CD14-positive monocyte (primary cell): ENCODE measurements at regions of chr18 and their contacts with region 1.

Region 1: GRCh38 chr18:463827-464541 is 36.5 kb downstream of the COLEC12 start:
- DNase-seq: peak; percentile 80 to 89 (median 88)
- H3K4me3 ChIP-seq: peak overlapping the region in 1 of 3 experiments; percentile 41
- H3K4me3 Mint-ChIP-seq: peak overlapping the region in 1 of 2 donors; percentile 71
- H3K27ac ChIP-seq: peak overlapping the region; percentile 41 to 67
- H3K27ac Mint-ChIP-seq: peak overlapping the region; percentile 80 to 93 (median 91)
- H3K4me1 ChIP-seq: peaks cover 28 to 32% of the 10 kb centered on the region in 2 donors
- H3K4me1 Mint-ChIP-seq: peaks cover 24% of the 10 kb centered on the region
- H3K27me3 ChIP-seq: no peaks in the 10 kb centered on the region
- H3K27me3 Mint-ChIP-seq: peaks cover 0 to 2% (median 0%) of the 10 kb centered on the region in 3 donors
- CTCF ChIP-seq: no peak

Region 2: DNA sequence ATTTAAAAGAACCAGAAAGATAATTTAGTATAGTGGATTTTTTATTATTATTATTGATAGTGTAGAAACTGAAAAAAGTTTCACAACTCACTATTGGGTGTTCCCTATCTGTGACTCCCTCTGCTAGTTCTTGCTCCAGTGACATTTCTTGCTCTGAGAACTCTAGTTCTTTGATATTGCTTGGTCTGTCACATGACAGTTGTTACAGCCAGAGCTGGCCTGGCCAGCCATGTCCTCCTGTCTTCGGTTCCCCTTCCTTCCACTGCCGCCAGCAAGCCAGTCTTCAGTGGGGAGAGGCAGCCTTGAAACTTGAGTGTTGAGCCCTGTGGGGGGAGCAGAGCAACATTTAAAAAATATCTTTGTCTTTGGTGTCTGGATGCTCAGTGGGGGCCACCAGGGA is 188.5 kb before region 1 on chr18:
- intact Hi-C with region 1: loop called in 1 of 2 experiments (anchors 10 kb)
- DNase-seq: peak; percentile 21 to 71 (median 34)
- H3K4me3 ChIP-seq: no peak overlapping the region
- H3K4me3 Mint-ChIP-seq: peak overlapping the region; percentile 11 to 51
- H3K27ac ChIP-seq: no peak overlapping the region
- H3K27ac Mint-ChIP-seq: peak overlapping the region in 6 of 7 donors; percentile 40 to 75 (median 54)
- H3K4me1 ChIP-seq: peaks cover 4 to 10% of the 10 kb centered on the region in 2 donors
- H3K4me1 Mint-ChIP-seq: peaks cover 5% of the 10 kb centered on the region
- H3K27me3 ChIP-seq: no peaks in the 10 kb centered on the region
- H3K27me3 Mint-ChIP-seq: peaks cover 4 to 8% (median 7%) of the 10 kb centered on the region in 3 donors
- CTCF ChIP-seq: no peak

Region 3: GRCh38 chr18:335733-336132 is 128.3 kb before region 1 on chr18:
- intact Hi-C with region 1: loop called in 1 of 2 experiments (anchors 5 kb)
- DNase-seq: peak; percentile 53 to 86 (median 72)
- H3K4me3 ChIP-seq: no peak overlapping the region
- H3K4me3 Mint-ChIP-seq: no peak overlapping the region
- H3K27ac ChIP-seq: peak overlapping the region in 1 of 2 donors; percentile 50
- H3K27ac Mint-ChIP-seq: peak overlapping the region in 3 of 7 donors; percentile 48 to 75 (median 61)
- H3K4me1 ChIP-seq: peaks cover 43 to 44% of the 10 kb centered on the region in 2 donors
- H3K4me1 Mint-ChIP-seq: peaks cover 47% of the 10 kb centered on the region
- H3K27me3 ChIP-seq: no peaks in the 10 kb centered on the region
- H3K27me3 Mint-ChIP-seq: peaks cover 0 to 1% (median 1%) of the 10 kb centered on the region in 3 donors
- CTCF ChIP-seq: no peak

Region 4: GRCh38 chr18:354003-354402 is 110.0 kb before region 1 on chr18:
- intact Hi-C with region 1: no loop called
- DNase-seq: no peak
- H3K4me3 ChIP-seq: no peak overlapping the region
- H3K4me3 Mint-ChIP-seq: no peak overlapping the region
- H3K27ac ChIP-seq: no peak overlapping the region
- H3K27ac Mint-ChIP-seq: no peak overlapping the region
- H3K4me1 ChIP-seq: no peaks in the 10 kb centered on the region
- H3K4me1 Mint-ChIP-seq: no peaks in the 10 kb centered on the region
- H3K27me3 ChIP-seq: no peaks in the 10 kb centered on the region
- H3K27me3 Mint-ChIP-seq: peaks cover 0 to 2% (median 0%) of the 10 kb centered on the region in 3 donors
- CTCF ChIP-seq: no peak

Region 5: DNA sequence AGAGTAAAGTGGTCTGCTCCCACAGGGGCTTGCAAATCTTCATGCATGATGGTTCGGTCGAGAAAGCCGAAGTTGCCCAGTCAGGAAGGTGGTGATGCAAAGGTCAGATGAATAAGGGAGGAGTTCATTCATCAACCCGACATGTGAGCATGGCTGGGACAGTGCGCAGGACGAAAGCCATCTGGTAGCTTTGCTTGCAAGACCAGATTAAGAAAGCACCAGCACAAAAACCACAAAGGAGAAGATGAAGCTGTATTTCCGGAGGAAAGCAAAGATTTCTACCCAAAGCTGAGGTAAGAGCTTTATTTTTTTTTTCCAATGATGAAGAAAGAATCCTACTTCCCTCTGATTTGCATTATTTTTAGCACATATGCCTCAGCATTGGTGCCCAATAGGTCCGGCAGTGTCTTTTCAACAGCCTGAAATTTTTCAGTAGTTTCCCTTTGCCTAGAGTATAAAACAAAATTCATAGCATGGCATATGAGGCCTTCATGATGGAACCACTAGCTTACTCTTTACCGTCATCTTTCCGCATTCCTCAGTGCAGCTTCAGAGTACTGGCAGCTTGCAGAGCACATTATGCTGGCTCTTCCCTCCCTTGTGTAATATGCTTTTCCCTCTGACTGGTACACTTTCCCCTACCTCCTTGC is 84.2 kb before region 1 on chr18:
- intact Hi-C with region 1: loop called (anchors 5 to 10 kb)
- DNase-seq: peak; percentile 75 to 90 (median 87)
- H3K4me3 ChIP-seq: peak overlapping the region in 1 of 3 experiments; percentile 55
- H3K4me3 Mint-ChIP-seq: peak overlapping the region; percentile 18 to 89
- H3K27ac ChIP-seq: peak overlapping the region; percentile 68 to 71
- H3K27ac Mint-ChIP-seq: peak overlapping the region; percentile 93 to 98 (median 95)
- H3K4me1 ChIP-seq: peaks cover 69 to 73% of the 10 kb centered on the region in 2 donors
- H3K4me1 Mint-ChIP-seq: peaks cover 74% of the 10 kb centered on the region
- H3K27me3 ChIP-seq: no peaks in the 10 kb centered on the region
- H3K27me3 Mint-ChIP-seq: peaks cover 0 to 3% (median 2%) of the 10 kb centered on the region in 3 donors
- CTCF ChIP-seq: no peak

Region 6: DNA sequence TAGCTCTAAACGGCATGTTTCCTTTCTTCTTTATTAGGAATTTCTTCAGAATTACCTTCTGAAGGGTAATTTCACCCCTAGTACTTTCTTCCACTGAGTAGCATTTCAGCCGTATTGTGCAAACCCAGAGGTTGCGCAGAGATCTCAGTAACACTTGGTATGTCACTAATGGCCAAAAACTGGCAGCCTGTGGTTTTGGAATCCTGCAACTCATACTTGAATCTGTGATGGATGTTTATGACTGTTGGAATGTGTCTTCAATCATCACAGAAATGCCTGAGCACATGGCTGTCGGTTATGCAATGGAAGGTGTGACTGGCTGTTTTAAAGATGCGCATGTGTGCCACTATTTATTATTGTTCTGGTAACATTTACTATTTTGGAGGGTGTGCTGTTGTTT is 63.5 kb before region 1 on chr18:
- intact Hi-C with region 1: loop called in 1 of 2 experiments (anchors 5 kb)
- DNase-seq: peak; percentile 83 to 86 (median 85)
- H3K4me3 ChIP-seq: no peak overlapping the region
- H3K4me3 Mint-ChIP-seq: no peak overlapping the region
- H3K27ac ChIP-seq: peak overlapping the region in 1 of 2 donors; percentile 59
- H3K27ac Mint-ChIP-seq: peak overlapping the region; percentile 79 to 91 (median 87)
- H3K4me1 ChIP-seq: peaks cover 55 to 61% of the 10 kb centered on the region in 2 donors
- H3K4me1 Mint-ChIP-seq: peaks cover 72% of the 10 kb centered on the region
- H3K27me3 ChIP-seq: no peaks in the 10 kb centered on the region
- H3K27me3 Mint-ChIP-seq: peaks cover 0 to 2% (median 0%) of the 10 kb centered on the region in 3 donors
- CTCF ChIP-seq: no peak

Region 7: GRCh38 chr18:499551-500408 is 35.8 kb after region 1 on chr18:
- intact Hi-C with region 1: loop called in 1 of 2 experiments (anchors 5 kb)
- DNase-seq: no peak
- H3K4me3 ChIP-seq: peak overlapping the region; percentile 17 to 77 (median 44)
- H3K4me3 Mint-ChIP-seq: peak overlapping the region; percentile 82 to 93
- H3K27ac ChIP-seq: no peak overlapping the region
- H3K27ac Mint-ChIP-seq: peak overlapping the region in 2 of 7 donors; percentile 5 to 53
- H3K4me1 ChIP-seq: peaks cover 26 to 33% of the 10 kb centered on the region in 2 donors
- H3K4me1 Mint-ChIP-seq: peaks cover 30% of the 10 kb centered on the region
- H3K27me3 ChIP-seq: peaks cover 34 to 59% of the 10 kb centered on the region in 2 donors
- H3K27me3 Mint-ChIP-seq: peaks cover 53 to 67% (median 58%) of the 10 kb centered on the region in 3 donors
- CTCF ChIP-seq: no peak